Caco-2 (cell line): ENCODE measurements at regions of chr6 and their contacts with region 1.

Region 1: GRCh38 chr6:139588076-139588639 is 213.7 kb upstream of the CITED2 start:
- DNase-seq: peak; percentile 30 to 45
- H3K4me3 ChIP-seq: no peak overlapping the region
- H3K4me3 Mint-ChIP-seq: peak overlapping the region; percentile 22
- H3K27ac Mint-ChIP-seq: peak overlapping the region; percentile 91
- H3K4me1 ChIP-seq: peaks cover 71% of the 10 kb centered on the region
- H3K4me1 Mint-ChIP-seq: peaks cover 71% of the 10 kb centered on the region
- H3K27me3 ChIP-seq: no peaks in the 10 kb centered on the region
- H3K27me3 Mint-ChIP-seq: no peaks in the 10 kb centered on the region
- CTCF ChIP-seq: no peak

Region 2: DNA sequence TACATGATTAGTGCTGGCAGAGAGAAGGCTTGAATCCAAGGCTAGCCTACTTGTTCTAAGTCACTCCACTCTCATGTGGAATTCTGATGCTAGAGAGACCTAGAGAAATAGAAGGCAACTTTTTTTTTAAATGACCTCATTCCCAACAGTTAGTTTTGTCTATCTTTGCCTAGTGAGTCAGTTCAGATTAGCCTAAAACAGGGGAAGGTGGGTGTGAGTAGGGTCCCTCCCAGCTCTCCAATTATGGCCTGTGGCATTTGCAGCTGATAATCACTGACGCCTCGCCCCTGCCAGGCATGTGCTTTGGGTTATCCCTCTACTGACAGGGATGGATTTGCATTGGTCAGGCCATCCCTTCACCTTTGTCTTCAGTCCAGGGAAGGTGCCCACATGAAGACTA is 310.0 kb before region 1 on chr6:
- CTCF ChIA-PET with region 1: no interaction called
- POLR2A ChIA-PET with region 1: no interaction called
- intact Hi-C with region 1: no loop called
- DNase-seq: peak; percentile 14 to 42
- H3K4me3 ChIP-seq: no peak overlapping the region
- H3K4me3 Mint-ChIP-seq: no peak overlapping the region
- H3K27ac Mint-ChIP-seq: no peak overlapping the region
- H3K4me1 ChIP-seq: peaks cover 18% of the 10 kb centered on the region
- H3K4me1 Mint-ChIP-seq: peaks cover 15% of the 10 kb centered on the region
- H3K27me3 ChIP-seq: no peaks in the 10 kb centered on the region
- H3K27me3 Mint-ChIP-seq: no peaks in the 10 kb centered on the region
- CTCF ChIP-seq: no peak

Region 3: DNA sequence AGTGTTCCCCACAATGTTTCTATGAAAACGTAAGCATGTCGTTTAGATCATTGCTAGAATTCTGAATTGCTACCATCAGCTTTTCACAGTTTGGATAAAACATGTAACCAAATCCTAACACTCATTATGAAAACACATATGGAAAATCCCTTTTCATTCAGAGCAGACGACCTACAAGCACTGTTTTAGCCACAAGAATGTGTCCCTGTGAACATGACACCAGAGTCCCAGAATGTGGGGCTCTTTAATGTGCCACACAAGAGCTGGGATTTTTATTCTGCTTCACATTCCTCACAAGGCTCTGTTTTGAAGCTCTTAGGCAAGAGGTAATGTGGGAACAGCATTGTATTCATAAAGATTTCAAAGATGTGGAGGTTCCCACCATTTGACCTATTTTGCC is 72.6 kb before region 1 on chr6:
- CTCF ChIA-PET with region 1: no interaction called
- POLR2A ChIA-PET with region 1: no interaction called
- intact Hi-C with region 1: loop called (anchors 5 kb)
- DNase-seq: no peak
- H3K4me3 ChIP-seq: no peak overlapping the region
- H3K4me3 Mint-ChIP-seq: no peak overlapping the region
- H3K27ac Mint-ChIP-seq: no peak overlapping the region
- H3K4me1 ChIP-seq: peaks cover 23% of the 10 kb centered on the region
- H3K4me1 Mint-ChIP-seq: peaks cover 31% of the 10 kb centered on the region
- H3K27me3 ChIP-seq: no peaks in the 10 kb centered on the region
- H3K27me3 Mint-ChIP-seq: no peaks in the 10 kb centered on the region
- CTCF ChIP-seq: no peak

Region 4: GRCh38 chr6:139533573-139534471 is 54.3 kb before region 1 on chr6:
- CTCF ChIA-PET with region 1: no interaction called
- POLR2A ChIA-PET with region 1: interaction called, 4 read pairs
- intact Hi-C with region 1: loop called (anchors 2 kb)
- DNase-seq: peak; percentile 28 to 50
- H3K4me3 ChIP-seq: peak overlapping the region; percentile 3; the same call in 1 of the 2 replicates
- H3K4me3 Mint-ChIP-seq: peak overlapping the region; percentile 67
- H3K27ac Mint-ChIP-seq: peak overlapping the region; percentile 90
- H3K4me1 ChIP-seq: peaks cover 54% of the 10 kb centered on the region
- H3K4me1 Mint-ChIP-seq: peaks cover 36% of the 10 kb centered on the region
- H3K27me3 ChIP-seq: no peaks in the 10 kb centered on the region
- H3K27me3 Mint-ChIP-seq: no peaks in the 10 kb centered on the region
- CTCF ChIP-seq: no peak